AG04450 (cell line): ENCODE measurements at regions of chr6 and their contacts with region 1.

Region 1: DNA sequence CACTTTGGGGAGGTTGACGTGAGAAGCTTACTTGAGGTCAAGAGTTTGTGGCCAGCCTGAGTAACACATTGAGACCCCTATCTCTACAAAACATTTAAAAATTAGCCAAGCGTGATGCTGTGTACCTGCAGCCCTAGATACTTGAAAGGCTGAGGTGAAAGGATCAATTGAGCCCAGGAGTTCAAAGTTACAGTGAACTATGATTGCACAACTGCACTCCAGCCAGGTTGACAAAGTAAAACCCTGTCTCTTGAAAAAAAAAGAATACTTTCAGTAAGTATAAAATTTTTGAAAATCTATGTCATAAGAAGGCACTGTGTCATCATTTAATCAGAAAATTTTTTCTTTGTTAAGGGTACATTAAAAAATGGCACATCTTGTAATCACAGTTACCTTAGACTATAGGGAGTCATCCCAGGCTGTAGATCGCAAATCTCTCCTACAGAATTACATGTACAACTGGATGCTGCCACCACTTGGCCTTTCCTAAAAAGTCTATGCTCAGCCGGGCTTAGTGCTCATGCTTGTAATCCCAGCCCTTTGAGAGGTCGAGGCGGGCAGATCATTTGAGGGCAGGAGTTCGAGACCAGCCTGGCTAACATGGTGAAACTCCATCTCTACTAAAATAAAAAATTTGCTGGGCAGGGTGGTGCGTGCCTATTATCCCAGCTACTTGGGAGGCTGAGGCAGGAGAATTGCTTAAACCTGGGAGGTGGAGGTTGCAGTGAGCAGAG is 17.0 kb upstream of the MRS2 start:
- DNase-seq: no peak
- H3K4me3 ChIP-seq: no peak overlapping the region
- H3K27ac ChIP-seq: no peak overlapping the region
- H3K27me3 ChIP-seq: no peaks in the 10 kb centered on the region
- CTCF ChIP-seq: no peak

Region 2: GRCh38 chr6:24283043-24283985 is 102.4 kb before region 1 on chr6:
- CTCF ChIA-PET with region 1: interaction called, 83 read pairs
- POLR2A ChIA-PET with region 1: no interaction called
- DNase-seq: no peak
- H3K4me3 ChIP-seq: no peak overlapping the region
- H3K27ac ChIP-seq: no peak overlapping the region
- H3K27me3 ChIP-seq: no peaks in the 10 kb centered on the region
- CTCF ChIP-seq: peak; percentile 59